ENCODE measurements at regions of chr20 and their contacts with region 1.

Region 1: DNA sequence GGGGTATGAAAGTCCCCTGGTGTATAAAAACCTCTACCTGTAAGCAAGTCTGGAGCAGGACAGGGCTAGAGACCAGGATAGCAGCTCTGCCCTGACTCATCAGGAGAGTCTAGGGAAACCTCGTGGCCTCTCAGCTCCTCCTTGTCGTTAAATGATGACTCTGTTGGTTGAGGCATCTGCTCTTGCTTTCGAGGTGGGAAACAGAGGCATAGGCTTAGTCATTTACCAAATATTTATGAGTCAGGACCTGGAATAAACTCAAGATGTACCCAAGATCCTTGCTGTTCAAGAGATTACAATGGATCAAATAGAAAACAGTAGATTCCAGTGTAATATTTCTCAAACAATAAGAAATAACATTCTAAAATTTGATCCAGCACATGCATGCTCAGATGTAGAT is 5.5 kb downstream of the MANBAL start:
- DNase-seq: peak; percentile 99
- H3K4me3 ChIP-seq: peak overlapping the region in 1 of 3 experiments; percentile 18
- H3K27ac ChIP-seq: peak overlapping the region; percentile 90
- H3K4me1 ChIP-seq: peaks cover 61% of the 10 kb centered on the region
- H3K27me3 ChIP-seq: no peaks in the 10 kb centered on the region
- CTCF ChIP-seq: no peak

Region 2: DNA sequence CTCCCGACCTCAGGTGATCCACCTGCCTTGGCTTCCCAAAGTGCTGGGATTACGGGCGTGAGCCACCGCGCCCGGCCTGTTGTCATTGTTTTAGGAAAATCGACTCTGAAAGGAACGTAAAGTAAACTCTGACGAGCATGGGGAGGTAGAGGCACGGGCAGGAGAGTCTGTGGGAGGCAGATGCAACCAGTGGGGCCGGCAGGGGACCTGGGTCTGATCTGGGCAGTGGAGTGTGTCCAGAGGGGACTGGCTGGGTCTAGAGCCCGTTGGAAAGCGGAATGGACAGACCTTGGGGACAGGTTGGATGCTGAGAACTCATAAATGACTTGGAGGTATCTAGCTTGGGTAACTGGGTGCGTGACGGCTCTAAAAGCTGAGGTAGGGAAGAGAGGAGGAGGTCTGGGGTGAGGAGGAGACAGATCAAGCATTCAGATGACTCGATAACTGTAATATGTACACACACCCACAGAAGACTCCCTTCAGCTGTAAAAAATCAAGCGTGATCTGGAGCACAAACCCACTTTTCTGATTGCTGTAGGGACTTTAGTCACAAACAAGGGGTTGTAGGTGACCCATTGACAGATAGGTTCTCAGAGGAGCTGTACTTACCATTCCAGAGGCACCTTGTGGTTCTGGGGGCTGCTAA is 16.8 kb after region 1 on chr20:
- CTCF ChIA-PET with region 1: no interaction called
- dilution Hi-C with region 1: no loop called
- in situ Hi-C with region 1: no loop called
- intact Hi-C with region 1: loop called (anchors 2 kb)
- DNase-seq: no peak
- H3K4me3 ChIP-seq: no peak overlapping the region
- H3K27ac ChIP-seq: no peak overlapping the region
- H3K4me1 ChIP-seq: peaks cover 72% of the 10 kb centered on the region
- H3K27me3 ChIP-seq: no peaks in the 10 kb centered on the region
- CTCF ChIP-seq: no peak

Region 3: GRCh38 chr20:37356387-37356786 is 61.4 kb after region 1 on chr20:
- CTCF ChIA-PET with region 1: no interaction called
- dilution Hi-C with region 1: loop called (anchors 10 kb)
- in situ Hi-C with region 1: no loop called
- intact Hi-C with region 1: loop called (anchors 1 kb)
- DNase-seq: peak; percentile 59
- H3K4me3 ChIP-seq: no peak overlapping the region
- H3K27ac ChIP-seq: no peak overlapping the region
- H3K4me1 ChIP-seq: peaks cover 48% of the 10 kb centered on the region
- H3K27me3 ChIP-seq: no peaks in the 10 kb centered on the region
- CTCF ChIP-seq: peak in 1 of 2 donors; percentile 4